ENCODE measurements at regions of chr15 and their contacts with region 1.

Region 1: GRCh38 chr15:37134699-37135131 is 34.4 kb upstream of the MEIS2 start:
- DNase-seq: no peak
- H3K4me3 ChIP-seq: no peak overlapping the region
- H3K27me3 ChIP-seq: no peaks in the 10 kb centered on the region
- CTCF ChIP-seq: peak; percentile 72

Region 2: DNA sequence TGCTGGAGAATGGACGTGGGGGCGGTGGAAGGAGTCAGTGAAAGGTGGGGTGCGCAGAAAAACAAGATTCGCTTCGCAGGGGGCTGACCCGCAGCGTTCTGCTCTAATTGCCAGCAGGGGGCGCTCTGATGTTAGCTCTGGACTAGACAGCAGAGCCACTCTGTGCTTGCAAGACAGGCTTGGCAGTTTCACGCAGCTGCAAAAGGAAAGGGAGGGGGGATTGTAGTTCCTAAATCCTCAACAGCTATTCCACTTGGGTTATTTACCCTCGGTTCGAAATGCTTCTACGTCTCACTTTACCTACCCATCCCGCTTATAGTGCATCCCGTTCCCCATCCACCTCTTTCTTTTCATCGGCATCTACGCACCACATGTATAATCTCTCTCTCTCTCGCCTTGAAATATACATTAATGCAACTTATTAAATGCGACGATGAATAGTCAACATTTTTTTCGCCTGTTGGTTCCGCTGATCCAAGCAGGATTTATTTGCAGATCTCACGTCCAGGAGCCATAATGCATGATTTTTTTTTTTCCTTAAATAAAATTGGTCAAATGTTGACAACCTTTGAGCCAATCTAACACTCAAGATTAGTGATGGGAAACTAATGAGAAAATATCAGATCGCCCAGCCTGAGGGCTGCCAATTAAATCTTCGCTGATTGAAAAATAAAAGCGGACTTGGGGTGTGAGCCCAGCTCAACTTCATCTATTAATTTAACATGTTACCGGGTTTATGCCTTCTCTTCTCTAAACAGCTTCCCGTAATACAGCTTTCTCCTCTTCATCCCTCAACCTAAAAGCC is 250.8 kb before region 1 on chr15:
- CTCF ChIA-PET with region 1: interaction called, 23 read pairs
- POLR2A ChIA-PET with region 1: no interaction called
- DNase-seq: peak; percentile 15
- H3K4me3 ChIP-seq: peak overlapping the region; percentile 21; the same call in 1 of the 2 replicates
- H3K27me3 ChIP-seq: peaks cover 2% of the 10 kb centered on the region
- CTCF ChIP-seq: peak; percentile 89

Region 3: GRCh38 chr15:37181339-37181738 is 46.6 kb after region 1 on chr15:
- CTCF ChIA-PET with region 1: no interaction called
- POLR2A ChIA-PET with region 1: no interaction called
- DNase-seq: no peak
- H3K4me3 ChIP-seq: no peak overlapping the region
- H3K27me3 ChIP-seq: no peaks in the 10 kb centered on the region
- CTCF ChIP-seq: no peak

Region 4: DNA sequence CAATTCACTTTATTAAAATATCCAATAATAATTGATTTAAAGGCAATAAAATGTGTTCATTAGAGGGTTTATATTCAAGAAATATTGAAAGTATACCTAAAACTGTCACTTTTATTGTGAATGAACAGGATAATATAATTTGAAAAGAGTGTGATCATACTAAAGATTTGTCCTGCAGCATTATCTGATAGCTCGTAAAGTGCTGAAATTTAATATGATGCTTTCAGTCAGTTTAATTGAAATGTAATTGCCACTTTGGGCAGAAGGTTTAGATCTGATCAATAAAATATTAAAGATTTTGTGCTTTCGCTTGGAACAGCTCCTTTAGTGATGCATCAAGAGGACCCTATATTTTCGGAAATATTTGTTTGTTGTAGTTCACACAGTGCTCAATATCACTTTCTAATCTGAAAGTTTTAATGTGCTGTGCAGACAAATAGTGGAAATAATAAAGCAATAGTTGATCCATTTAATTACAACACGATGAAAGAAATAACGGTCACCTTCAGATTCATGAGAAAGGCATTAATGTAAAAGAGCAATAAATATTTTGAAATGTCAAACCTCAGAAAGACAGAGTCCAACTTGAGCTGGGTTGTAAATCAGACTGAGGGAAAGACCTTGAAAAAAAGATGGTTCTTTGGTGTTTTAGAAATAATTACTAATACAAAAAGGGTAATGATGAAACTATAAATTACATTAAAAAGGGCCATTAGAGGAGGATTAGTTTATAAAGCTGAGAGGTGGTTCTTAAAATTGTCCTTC is 95.3 kb after region 1 on chr15:
- CTCF ChIA-PET with region 1: no interaction called
- POLR2A ChIA-PET with region 1: no interaction called
- DNase-seq: no peak
- H3K4me3 ChIP-seq: no peak overlapping the region
- H3K27me3 ChIP-seq: no peaks in the 10 kb centered on the region; the same call in 1 of the 2 replicates
- CTCF ChIP-seq: no peak